Activated naive CD4-positive, alpha-beta T cell treated with anti-CD3 and anti-CD28 coated beads for 36 hours (primary cell): ENCODE measurements at regions of chr11 and their contacts with region 1.

Region 1: DNA sequence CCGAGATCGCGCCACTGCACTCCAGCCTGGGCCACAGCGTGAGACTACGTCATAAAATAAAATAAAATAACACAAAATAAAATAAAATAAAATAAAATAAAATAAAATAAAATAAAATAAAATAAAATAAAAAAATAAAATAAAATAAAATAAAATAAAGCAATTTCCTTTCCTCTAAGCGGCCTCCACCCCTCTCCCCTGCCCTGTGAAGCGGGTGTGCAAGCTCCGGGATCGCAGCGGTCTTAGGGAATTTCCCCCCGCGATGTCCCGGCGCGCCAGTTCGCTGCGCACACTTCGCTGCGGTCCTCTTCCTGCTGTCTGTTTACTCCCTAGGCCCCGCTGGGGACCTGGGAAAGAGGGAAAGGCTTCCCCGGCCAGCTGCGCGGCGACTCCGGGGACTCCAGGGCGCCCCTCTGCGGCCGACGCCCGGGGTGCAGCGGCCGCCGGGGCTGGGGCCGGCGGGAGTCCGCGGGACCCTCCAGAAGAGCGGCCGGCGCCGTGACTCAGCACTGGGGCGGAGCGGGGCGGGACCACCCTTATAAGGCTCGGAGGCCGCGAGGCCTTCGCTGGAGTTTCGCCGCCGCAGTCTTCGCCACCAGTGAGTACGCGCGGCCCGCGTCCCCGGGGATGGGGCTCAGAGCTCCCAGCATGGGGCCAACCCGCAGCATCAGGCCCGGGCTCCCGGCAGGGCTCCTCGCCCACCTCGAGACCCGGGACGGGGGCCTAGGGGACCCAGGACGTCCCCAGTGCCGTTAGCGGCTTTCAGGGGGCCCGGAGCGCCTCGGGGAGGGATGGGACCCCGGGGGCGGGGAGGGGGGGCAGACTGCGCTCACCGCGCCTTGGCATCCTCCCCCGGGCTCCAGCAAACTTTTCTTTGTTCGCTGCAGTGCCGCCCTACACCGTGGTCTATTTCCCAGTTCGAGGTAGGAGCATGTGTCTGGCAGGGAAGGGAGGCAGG is at the start of gene GSTP1:
- DNase-seq: peak; percentile 81
- H3K4me3 Mint-ChIP-seq: peak within 1 kb of the TSS; percentile 94
- H3K27ac Mint-ChIP-seq: peak within 1 kb of the TSS; percentile 85
- H3K4me1 Mint-ChIP-seq: peaks cover 47% of the 10 kb centered on the region
- H3K27me3 Mint-ChIP-seq: peaks cover 3% of the 10 kb centered on the region
- total RNA-seq, gene GSTP1: 398 to 403 TPM

Region 2: GRCh38 chr11:67606492-67607201 is 23.1 kb after region 1 on chr11 and contains the start of gene NDUFV1:
- CTCF ChIA-PET with region 1: interaction called, 3 read pairs
- intact Hi-C with region 1: loop called (anchors 1 kb)
- DNase-seq: peak; percentile 97
- H3K4me3 Mint-ChIP-seq: peak within 1 kb of the TSS; percentile 90
- H3K27ac Mint-ChIP-seq: peak within 1 kb of the TSS; percentile 85
- H3K4me1 Mint-ChIP-seq: peaks cover 17% of the 10 kb centered on the region
- H3K27me3 Mint-ChIP-seq: peaks cover 6% of the 10 kb centered on the region
- total RNA-seq, gene NDUFV1: 347 to 356 TPM

Region 3: DNA sequence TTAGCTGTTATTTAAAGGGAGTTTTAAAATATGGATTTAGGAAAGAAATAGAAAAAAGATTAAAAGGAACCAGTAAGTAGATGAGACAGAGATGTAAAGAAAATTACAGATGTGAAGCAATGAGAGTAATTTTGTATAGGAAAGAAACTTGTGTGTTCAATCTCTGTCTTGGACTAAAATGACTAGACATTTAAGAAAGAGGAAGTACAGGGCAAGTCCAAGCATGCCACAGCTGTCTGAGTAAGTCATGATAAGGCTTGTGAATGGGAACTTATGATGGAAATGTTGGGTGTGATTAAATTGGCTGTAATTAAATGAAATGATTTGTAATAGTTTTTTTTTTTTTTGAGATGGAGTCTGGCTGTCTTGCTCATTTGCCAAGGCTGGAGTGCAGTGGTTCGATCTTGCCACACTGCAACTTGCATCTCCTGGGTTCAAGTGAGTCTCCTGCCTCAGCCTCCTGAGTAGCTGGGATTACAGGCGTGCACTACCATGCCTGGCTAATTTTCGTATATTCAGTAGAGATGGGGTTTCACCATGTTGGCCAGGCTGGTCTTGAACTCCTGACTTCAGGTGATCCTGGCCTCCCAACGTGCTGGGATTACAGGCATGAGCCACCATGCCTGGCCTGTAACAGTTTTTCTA is 72.9 kb after region 1 on chr11:
- CTCF ChIA-PET with region 1: no interaction called
- intact Hi-C with region 1: loop called (anchors 5 kb)
- DNase-seq: peak; percentile 41
- H3K4me3 Mint-ChIP-seq: no peak overlapping the region
- H3K27ac Mint-ChIP-seq: no peak overlapping the region
- H3K4me1 Mint-ChIP-seq: peaks cover 10% of the 10 kb centered on the region
- H3K27me3 Mint-ChIP-seq: no peaks in the 10 kb centered on the region

Region 4: DNA sequence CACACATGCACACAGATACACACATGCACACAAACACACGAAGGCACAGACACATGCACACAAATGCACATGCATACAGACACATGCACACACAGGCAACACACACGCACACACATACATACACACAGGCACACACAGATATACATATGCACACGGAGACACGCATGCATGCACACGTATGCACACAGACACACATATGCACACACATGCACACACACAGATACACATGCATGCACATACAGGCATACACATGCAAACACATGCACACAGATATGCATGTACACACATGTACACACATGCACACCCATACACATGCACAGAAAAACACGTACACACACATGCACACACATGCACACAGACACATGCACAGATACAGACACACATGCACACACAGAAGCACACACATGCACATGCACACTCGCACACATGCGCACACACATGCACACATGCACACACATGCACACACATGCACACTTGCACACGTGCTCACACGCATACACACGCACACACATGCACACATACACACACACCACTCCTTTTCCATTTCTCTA is 161.7 kb after region 1 on chr11:
- CTCF ChIA-PET with region 1: no interaction called
- intact Hi-C with region 1: no loop called
- DNase-seq: no peak
- H3K4me3 Mint-ChIP-seq: no peak overlapping the region
- H3K27ac Mint-ChIP-seq: no peak overlapping the region
- H3K4me1 Mint-ChIP-seq: no peaks in the 10 kb centered on the region
- H3K27me3 Mint-ChIP-seq: no peaks in the 10 kb centered on the region